PC-9 (cell line): ENCODE measurements at regions of chr5 and their contacts with region 1.

Region 1: GRCh38 chr5:138528208-138528607 is 14.8 kb downstream of the ETF1 start:
- DNase-seq: peak in 1 of 2 experiments; percentile 80
- H3K4me3 ChIP-seq: no peak overlapping the region
- H3K27ac ChIP-seq: peak overlapping the region; percentile 49
- H3K4me1 ChIP-seq: peaks cover 36% of the 10 kb centered on the region
- H3K27me3 ChIP-seq: no peaks in the 10 kb centered on the region
- CTCF ChIP-seq: no peak

Region 2: DNA sequence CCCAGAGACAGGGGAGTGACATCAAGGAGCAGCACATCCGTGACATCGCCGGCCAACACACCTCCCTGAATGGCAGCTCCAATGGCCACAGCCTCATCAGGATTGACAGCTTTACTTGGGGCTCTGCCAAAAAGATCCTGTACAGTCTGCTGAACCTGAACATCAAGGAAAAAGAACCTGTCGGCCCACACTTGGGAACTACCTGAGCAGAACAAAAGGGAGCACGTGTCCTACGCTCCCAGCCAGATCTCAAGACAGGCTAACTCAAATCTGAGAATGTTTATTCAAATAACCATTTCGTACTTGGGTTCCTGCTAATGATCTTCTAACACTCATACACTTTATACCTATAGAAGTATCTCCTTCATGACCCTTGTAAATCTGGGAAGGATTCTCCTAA is 31.7 kb after region 1 on chr5:
- CTCF ChIA-PET with region 1: no interaction called
- POLR2A ChIA-PET with region 1: interaction called, 10 read pairs
- intact Hi-C with region 1: no loop called
- DNase-seq: no peak
- H3K4me3 ChIP-seq: no peak overlapping the region
- H3K27ac ChIP-seq: no peak overlapping the region
- H3K4me1 ChIP-seq: no peaks in the 10 kb centered on the region
- H3K27me3 ChIP-seq: no peaks in the 10 kb centered on the region
- CTCF ChIP-seq: no peak